A549 (cell line): ENCODE measurements at regions of chr1 and their contacts with region 1.

Region 1: GRCh38 chr1:113042285-113043143 is 30.5 kb upstream of the LRIG2 start:
- DNase-seq: peak; percentile 55 to 57
- ATAC-seq: peak; percentile 91 to 96
- H3K4me3 ChIP-seq: no peak overlapping the region
- H3K27ac ChIP-seq: 0 out of 6 replicates have a peak overlapping the region, but pooled peaks of 1 of the 2 experiments have one; percentile 4
- H3K4me1 ChIP-seq: peaks cover 4% of the 10 kb centered on the region; the same call in 1 of the 3 replicates
- CTCF ChIP-seq: peak; percentile 52
- EP300 ChIP-seq: no peak
- POLR2A ChIP-seq: no peak
- RAD21 ChIP-seq: peak; percentile 73 to 85

Region 2: DNA sequence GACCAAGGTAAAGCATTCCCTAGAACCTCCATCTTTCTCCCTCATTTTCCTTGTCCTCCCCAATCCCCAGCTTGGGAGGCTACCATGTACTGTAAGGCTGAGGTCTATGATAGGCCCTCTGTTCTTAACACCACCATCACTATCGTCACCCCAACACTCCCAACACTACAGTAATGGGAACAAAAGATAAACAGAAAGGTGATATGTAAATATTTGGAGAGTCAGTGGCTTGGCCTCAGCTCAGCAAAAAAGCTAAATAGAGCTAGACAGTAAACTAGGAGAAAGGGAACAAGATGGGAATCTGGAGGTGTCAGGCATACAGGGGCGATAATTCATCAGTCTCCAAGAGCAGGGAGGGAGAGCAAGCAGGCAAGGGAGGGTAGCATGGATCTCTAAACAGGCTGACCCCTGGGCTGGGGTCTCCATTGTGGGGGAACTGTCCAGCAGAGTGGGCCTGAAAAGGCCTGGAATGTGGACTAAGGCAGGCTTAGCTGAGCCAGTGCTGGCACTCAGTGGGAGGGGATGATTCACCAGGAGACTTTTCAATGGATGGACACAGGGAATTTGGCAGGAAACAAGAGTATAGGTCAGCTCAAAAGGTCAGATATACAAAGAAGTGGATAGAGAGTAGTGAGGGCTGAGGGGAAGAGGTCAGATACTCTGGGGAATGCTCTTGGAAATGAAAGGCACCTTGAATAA is 527.1 kb before region 1 on chr1:
- CTCF ChIA-PET with region 1: no interaction called
- POLR2A ChIA-PET with region 1: no interaction called
- DNase-seq: no peak
- ATAC-seq: peak; percentile 52 to 70; a peak in 3 of 6 replicates
- H3K4me3 ChIP-seq: no peak overlapping the region
- H3K27ac ChIP-seq: no peak overlapping the region
- H3K4me1 ChIP-seq: peaks cover 7% of the 10 kb centered on the region; the same call in 1 of the 3 replicates
- CTCF ChIP-seq: no peak
- EP300 ChIP-seq: no peak
- POLR2A ChIP-seq: no peak
- RAD21 ChIP-seq: no peak

Region 3: GRCh38 chr1:112809253-112809684 is 233.2 kb before region 1 on chr1:
- CTCF ChIA-PET with region 1: interaction called, 12 read pairs
- POLR2A ChIA-PET with region 1: no interaction called
- DNase-seq: peak; percentile 49 to 79
- ATAC-seq: peak; percentile 92 to 95
- H3K4me3 ChIP-seq: no peak overlapping the region
- H3K27ac ChIP-seq: no peak overlapping the region
- H3K4me1 ChIP-seq: no peaks in the 10 kb centered on the region
- CTCF ChIP-seq: peak; percentile 71
- EP300 ChIP-seq: no peak
- POLR2A ChIP-seq: no peak
- RAD21 ChIP-seq: peak; percentile 75

Region 4: GRCh38 chr1:112882271-112882744 is 160.2 kb before region 1 on chr1:
- CTCF ChIA-PET with region 1: interaction called, 66 read pairs
- POLR2A ChIA-PET with region 1: no interaction called
- DNase-seq: no peak
- ATAC-seq: no peak
- H3K4me3 ChIP-seq: no peak overlapping the region
- H3K27ac ChIP-seq: no peak overlapping the region
- H3K4me1 ChIP-seq: no peaks in the 10 kb centered on the region
- CTCF ChIP-seq: no peak
- EP300 ChIP-seq: no peak
- POLR2A ChIP-seq: no peak
- RAD21 ChIP-seq: no peak

Region 5: GRCh38 chr1:113057006-113057405 is 14.5 kb after region 1 on chr1:
- CTCF ChIA-PET with region 1: interaction called, 16 read pairs
- POLR2A ChIA-PET with region 1: interaction called, 3 read pairs
- DNase-seq: no peak
- ATAC-seq: no peak
- H3K4me3 ChIP-seq: no peak overlapping the region
- H3K27ac ChIP-seq: no peak overlapping the region
- H3K4me1 ChIP-seq: no peaks in the 10 kb centered on the region
- CTCF ChIP-seq: no peak
- EP300 ChIP-seq: no peak
- POLR2A ChIP-seq: no peak
- RAD21 ChIP-seq: no peak

Region 6: DNA sequence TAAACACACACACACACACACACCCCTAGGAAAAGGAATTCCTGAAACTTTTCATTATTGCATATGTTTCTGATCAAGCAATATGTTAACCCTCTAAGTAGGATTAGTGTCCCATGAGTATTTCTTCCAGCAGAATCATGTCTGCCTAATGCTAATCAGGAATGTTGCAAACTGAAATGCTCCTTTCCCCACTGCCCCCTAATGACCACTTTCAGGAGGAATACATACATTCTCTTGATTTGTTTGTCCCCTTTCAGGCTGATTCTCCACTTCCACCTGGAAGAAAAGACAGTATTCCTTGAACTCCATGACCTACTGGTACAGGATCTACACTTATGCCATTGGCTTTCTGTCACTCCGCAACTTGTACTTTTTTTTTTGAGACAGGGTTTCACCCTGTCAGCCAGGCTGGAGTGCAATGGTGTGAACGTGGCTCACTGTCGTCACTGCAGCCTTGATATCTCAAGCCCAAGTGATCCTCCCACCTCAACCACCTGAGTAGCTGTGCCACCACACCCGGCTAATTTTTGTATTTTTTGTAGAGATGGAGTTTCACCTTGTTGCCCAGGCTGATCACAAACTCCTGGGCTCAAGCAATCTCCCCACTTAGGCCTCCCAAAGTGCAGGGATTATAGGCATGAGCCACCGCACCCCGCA is 87.1 kb after region 1 on chr1:
- CTCF ChIA-PET with region 1: no interaction called
- POLR2A ChIA-PET with region 1: no interaction called
- DNase-seq: no peak
- ATAC-seq: no peak
- H3K4me3 ChIP-seq: no peak overlapping the region
- H3K27ac ChIP-seq: no peak overlapping the region
- H3K4me1 ChIP-seq: no peaks in the 10 kb centered on the region
- CTCF ChIP-seq: no peak
- EP300 ChIP-seq: no peak
- POLR2A ChIP-seq: no peak
- RAD21 ChIP-seq: no peak

Region 7: DNA sequence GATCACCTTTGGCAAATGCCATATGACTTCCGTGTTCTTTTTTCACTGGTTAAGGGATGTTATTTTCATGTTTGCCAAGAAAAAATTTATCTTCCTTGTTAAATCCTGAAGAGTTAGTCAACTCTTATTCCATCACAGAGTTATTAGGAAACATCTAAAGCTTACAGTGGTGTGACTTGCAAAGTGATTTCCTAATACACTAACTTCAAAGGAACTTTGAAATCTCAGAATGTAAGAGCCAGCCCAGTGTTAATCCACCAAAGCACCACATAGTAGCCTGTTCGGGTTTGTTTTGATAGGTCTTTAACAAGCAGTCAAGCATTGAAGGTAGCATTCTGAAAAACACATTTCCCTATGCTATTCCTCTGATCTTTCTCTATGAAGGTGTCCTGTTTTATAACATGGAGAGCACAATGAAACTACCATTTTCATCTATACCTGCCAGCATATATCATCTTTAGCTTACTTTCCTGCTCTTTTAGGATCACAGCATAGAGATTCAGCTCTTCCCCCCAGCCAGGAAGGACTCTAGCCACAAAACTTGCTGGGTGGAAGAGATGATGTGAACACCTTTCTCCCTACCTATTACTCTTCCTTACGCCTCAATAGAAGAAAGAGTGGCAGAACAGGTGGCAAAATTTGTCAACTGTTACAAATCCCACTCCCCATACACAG is 265.4 kb after region 1 on chr1:
- CTCF ChIA-PET with region 1: no interaction called
- POLR2A ChIA-PET with region 1: no interaction called
- DNase-seq: peak in 1 of 2 experiments; percentile 29
- ATAC-seq: peak in 1 of 2 experiments; percentile 43; a peak in 2 of 6 replicates
- H3K4me3 ChIP-seq: no peak overlapping the region
- H3K27ac ChIP-seq: peak overlapping the region; percentile 48 to 65; a peak in 5 of 6 replicates
- H3K4me1 ChIP-seq: peaks cover 22% of the 10 kb centered on the region
- CTCF ChIP-seq: no peak
- EP300 ChIP-seq: peak in 1 of 2 experiments; percentile 43; a peak in 2 of 5 replicates
- POLR2A ChIP-seq: no peak
- RAD21 ChIP-seq: no peak